BJ (cell line): ENCODE measurements at regions of chr2 and their contacts with region 1.

Region 1: GRCh38 chr2:11465497-11466406 is at the start of gene E2F6:
- DNase-seq: peak; percentile 44
- H3K4me3 ChIP-seq: peak within 1 kb of the TSS; percentile 66
- H3K27me3 ChIP-seq: no peaks in the 10 kb centered on the region
- CTCF ChIP-seq: no peak
- polyA plus RNA-seq, gene E2F6: 4.9 and 7.9 TPM in 2 replicates

Region 2: GRCh38 chr2:11477994-11478393 is 12.2 kb after region 1 on chr2:
- CTCF ChIA-PET with region 1: interaction called, 16 read pairs
- POLR2A ChIA-PET with region 1: no interaction called
- DNase-seq: peak; percentile 16
- H3K4me3 ChIP-seq: no peak overlapping the region
- H3K27me3 ChIP-seq: peaks cover 25% of the 10 kb centered on the region
- CTCF ChIP-seq: peak; percentile 85